ENCODE measurements at regions of chr19 and their contacts with region 1.

Region 1: DNA sequence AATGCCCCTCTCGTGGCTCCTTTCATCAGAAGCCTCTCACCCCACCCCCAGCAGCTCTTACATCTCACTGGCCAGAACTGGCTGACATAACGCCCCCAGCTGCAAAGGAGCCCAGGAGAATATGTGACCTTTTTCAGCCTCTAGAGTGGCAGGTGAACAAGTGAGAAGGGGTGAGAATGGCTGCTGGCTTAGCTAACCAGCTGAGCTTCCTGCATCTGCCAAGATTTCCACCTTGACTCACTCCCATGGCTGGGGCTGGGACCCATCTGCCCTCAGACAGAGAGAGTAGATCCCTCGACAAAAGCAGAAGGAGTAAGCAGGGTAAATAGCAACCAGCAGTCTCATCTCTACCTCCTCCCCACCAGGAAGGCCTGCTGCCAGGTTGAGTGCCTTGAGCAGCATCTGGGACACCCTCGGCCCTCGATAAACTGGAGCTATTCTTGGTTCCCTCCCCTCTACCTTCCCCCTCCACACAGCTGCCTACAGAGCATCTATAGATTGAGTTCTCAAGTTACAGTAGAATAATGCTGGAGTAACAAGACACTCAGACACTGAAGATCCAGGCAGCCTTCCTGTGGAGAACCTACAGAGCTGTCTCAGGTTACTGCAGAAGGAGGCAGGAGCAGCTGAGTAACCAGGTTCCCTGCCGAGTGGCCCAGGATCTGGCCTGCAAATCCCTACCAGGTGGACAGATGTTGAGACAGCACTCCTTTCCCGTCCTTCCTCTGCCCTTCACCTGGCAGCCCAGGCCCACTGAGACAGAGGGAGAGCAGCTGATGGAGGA is 15.5 kb downstream of the KASH5 start:
- DNase-seq: peak; percentile 49 to 77
- H3K4me3 ChIP-seq: peak overlapping the region in 3 of 4 experiments; percentile 12 to 23 (median 17); a peak in 2 of 8 replicates
- H3K27ac ChIP-seq: peak overlapping the region; percentile 69
- H3K4me1 ChIP-seq: peaks cover 5 to 28% (median 12%) of the 10 kb centered on the region in 4 experiments
- H3K27me3 ChIP-seq: no peaks in the 10 kb centered on the region
- CTCF ChIP-seq: no peak
- EP300 ChIP-seq: no peak; a peak in 1 of 3 replicates
- POLR2A ChIP-seq: peak in 1 of 2 experiments; percentile 71; a peak in 2 of 3 replicates
- RAD21 ChIP-seq: no peak; a peak in 1 of 4 replicates

Region 2: DNA sequence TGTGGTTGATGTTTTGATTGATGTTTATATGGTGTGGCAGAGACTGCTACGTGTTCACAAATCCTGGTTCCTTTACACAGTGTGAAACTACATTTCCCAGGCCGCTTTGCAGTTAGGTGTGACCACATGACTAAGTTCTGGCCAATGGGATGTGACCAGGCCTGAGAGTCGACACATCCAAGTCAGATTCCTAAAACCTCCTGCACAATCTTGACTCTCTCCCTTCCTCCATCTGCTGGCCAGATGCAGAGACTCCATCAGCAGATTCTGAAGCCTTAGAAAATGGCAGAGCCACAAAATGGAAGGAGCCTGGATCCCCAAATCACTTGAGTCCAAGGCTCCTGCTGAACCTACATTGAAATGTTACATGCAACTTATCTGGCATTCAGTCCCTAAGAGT is 55.8 kb before region 1 on chr19:
- CTCF ChIA-PET with region 1: no interaction called
- POLR2A ChIA-PET with region 1: no interaction called
- DNase-seq: no peak
- H3K4me3 ChIP-seq: no peak overlapping the region
- H3K27ac ChIP-seq: no peak overlapping the region
- H3K4me1 ChIP-seq: no peaks in the 10 kb centered on the region
- H3K27me3 ChIP-seq: no peaks in the 10 kb centered on the region
- CTCF ChIP-seq: peak in 2 of 3 experiments; percentile 38 to 49; a peak in 3 of 4 replicates
- EP300 ChIP-seq: no peak
- POLR2A ChIP-seq: no peak
- RAD21 ChIP-seq: peak in 1 of 2 experiments; percentile 38; a peak in 2 of 4 replicates

Region 3: DNA sequence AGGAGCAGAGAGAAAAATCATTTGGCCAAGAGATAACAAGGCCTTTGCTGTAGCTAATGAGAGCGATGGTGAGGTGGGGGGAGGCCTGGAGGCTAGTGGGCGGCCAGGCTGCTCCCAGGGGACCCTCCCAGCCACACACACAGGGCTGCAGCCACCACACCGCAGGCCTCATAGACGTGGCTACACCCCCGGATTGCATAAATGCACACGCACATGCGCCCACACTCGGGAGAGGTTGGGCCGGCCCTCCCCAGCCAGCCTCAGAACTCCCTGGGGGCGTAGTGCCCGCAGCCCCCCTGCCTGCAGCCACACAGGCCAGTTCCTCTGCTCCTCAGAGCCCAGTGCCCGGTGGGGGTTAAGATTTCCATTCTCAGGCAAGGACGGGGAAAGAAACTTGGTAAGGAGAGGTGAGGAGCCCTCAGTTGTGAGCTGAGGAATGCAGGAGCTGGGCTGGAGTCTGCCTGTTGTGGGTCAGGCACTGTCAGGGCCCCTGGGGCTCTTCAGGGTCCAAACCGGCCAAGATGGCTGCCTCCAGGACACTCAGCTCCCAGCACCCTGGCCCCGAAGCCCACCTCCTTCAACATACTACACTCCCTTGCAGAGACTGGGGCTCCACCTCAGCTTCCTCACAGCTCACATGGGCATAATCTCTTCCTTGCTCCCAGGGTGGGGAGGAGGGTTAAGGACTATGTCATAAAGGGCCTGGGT is 11.7 kb after region 1 on chr19:
- CTCF ChIA-PET with region 1: interaction called, 291 read pairs
- POLR2A ChIA-PET with region 1: interaction called, 38 read pairs
- DNase-seq: no peak
- H3K4me3 ChIP-seq: no peak overlapping the region
- H3K27ac ChIP-seq: no peak overlapping the region
- H3K4me1 ChIP-seq: peaks cover 0 to 18% (median 11%) of the 10 kb centered on the region in 4 experiments; a peak in 5 of 7 replicates
- H3K27me3 ChIP-seq: no peaks in the 10 kb centered on the region
- CTCF ChIP-seq: no peak
- EP300 ChIP-seq: no peak
- POLR2A ChIP-seq: no peak
- RAD21 ChIP-seq: no peak